ENCODE measurements at regions of chr3 and their contacts with region 1.

Region 1: GRCh38 chr3:100254168-100254777 is 6.5 kb upstream of the TBC1D23 start:
- DNase-seq: peak; percentile 65
- H3K4me3 Mint-ChIP-seq: no peak overlapping the region
- H3K27ac Mint-ChIP-seq: no peak overlapping the region
- H3K4me1 Mint-ChIP-seq: peaks cover 13% of the 10 kb centered on the region
- H3K27me3 Mint-ChIP-seq: no peaks in the 10 kb centered on the region

Region 2: GRCh38 chr3:99833617-99834205 is 420.6 kb before region 1 on chr3:
- CTCF ChIA-PET with region 1: interaction called, 27 read pairs
- intact Hi-C with region 1: loop called (anchors 1 kb)
- DNase-seq: no peak
- H3K4me3 Mint-ChIP-seq: no peak overlapping the region
- H3K27ac Mint-ChIP-seq: no peak overlapping the region
- H3K4me1 Mint-ChIP-seq: peaks cover 12% of the 10 kb centered on the region
- H3K27me3 Mint-ChIP-seq: no peaks in the 10 kb centered on the region

Region 3: DNA sequence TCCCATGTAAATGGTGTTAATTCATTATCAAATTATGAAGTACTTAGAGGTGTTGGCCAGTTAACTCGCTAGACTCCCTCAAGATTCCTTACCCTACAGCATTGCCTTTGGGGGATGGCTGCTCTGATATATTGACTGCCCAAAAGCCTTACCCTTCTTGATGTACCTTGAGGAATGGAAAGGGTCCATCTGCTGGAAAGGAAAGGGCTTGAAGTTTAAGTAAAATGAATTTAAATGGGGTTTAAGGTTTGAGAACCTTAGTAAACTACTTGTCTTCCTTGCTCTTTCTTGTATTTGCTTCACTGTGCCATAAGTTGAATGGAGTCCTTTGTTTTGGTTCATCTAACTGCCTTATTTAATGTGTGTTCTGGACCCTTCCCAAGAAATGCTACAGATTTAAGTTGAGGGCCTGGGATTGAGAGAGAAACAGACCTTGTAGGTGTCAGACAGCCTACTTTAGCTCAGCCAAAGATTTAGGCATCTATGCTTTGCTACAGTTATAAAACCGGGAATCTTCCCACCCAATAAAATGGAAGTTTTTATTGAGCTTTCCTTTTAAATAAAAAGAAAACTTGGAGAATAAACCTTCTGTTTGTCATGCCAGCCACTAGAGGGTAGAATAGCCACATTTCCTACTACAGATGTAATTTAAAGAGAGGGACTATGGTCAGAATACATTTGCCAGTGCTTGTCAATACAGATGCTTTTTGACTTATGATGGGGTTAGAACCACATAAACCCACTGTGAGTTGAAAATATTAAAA is 411.3 kb before region 1 on chr3:
- CTCF ChIA-PET with region 1: interaction called, 8 read pairs
- intact Hi-C with region 1: loop called (anchors 1 kb)
- DNase-seq: no peak
- H3K4me3 Mint-ChIP-seq: no peak overlapping the region
- H3K27ac Mint-ChIP-seq: no peak overlapping the region
- H3K4me1 Mint-ChIP-seq: peaks cover 12% of the 10 kb centered on the region
- H3K27me3 Mint-ChIP-seq: no peaks in the 10 kb centered on the region

Measured in activated naive CD4-positive, alpha-beta T cell treated with anti-CD3 and anti-CD28 coated beads for 36 hours (primary cell).